MCF 10A (cell line): ENCODE measurements at regions of chr3 and their contacts with region 1.

Region 1: DNA sequence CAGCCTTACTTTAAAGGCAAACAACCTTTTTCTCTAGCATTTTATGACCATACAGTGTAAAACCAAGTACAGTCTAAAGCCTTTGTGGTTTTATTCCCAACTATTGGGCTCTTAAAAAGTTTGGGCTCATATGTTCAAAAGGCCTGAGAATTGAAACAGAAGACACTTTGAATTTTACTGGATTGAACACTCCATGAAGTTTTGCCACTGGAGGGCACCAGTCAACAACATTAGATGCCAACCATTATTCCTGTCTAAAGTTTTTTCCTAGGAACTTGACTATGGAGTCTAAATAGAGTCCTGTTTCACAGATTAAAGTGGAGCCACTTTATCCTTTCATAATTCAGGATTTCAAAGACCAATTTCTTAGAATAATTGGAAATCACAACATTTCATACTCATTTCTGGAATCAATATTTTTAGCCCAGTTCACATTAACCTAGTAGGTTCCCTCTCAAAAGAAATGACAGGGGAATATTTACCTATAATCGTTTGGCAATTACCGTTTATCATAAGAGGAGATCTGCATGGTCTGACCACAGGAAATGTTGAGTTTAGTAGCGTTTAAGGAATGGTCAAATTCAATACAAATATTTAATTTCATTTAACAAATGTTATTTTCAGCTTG is 244.1 kb upstream of the PDZRN3 start:
- DNase-seq: peak; percentile 54
- H3K4me3 Mint-ChIP-seq: no peak overlapping the region
- H3K27ac Mint-ChIP-seq: no peak overlapping the region
- H3K4me1 Mint-ChIP-seq: peaks cover 4% of the 10 kb centered on the region
- H3K27me3 Mint-ChIP-seq: peaks cover 11% of the 10 kb centered on the region
- CTCF ChIP-seq: peak; percentile 55

Region 2: DNA sequence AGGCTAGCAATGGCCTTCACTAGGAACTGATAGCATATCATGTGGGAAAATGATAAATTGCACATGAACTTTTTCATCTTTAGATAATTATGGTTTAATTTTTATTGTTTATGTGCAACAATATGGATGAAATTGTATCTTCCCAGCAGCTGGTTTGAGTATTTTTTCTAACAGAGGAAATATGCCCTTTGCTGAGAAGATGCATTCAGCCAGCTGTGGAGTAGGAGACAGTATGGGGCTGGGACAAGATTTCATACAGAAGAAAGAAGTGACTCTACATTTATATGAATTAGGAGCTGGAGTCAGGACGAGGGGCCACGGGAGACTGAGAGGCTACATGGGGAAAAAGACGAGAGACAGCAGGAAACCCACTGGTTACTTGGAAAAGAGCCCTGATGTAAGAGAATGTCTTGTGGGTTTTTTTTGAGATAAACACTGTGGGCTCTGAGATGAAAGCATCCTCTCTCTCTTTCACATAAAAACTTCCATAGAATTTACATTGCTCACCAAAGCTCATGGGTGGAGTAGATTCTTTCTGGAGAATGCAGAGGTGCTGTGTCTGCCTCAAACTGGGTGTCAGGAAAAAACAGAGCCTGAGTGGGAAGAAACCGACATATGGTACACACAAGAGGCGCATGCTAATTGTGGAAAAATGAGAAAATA is 128.9 kb before region 1 on chr3:
- CTCF ChIA-PET with region 1: no interaction called
- POLR2A ChIA-PET with region 1: no interaction called
- intact Hi-C with region 1: no loop called
- DNase-seq: no peak
- H3K4me3 Mint-ChIP-seq: no peak overlapping the region
- H3K27ac Mint-ChIP-seq: no peak overlapping the region
- H3K4me1 Mint-ChIP-seq: no peaks in the 10 kb centered on the region
- H3K27me3 Mint-ChIP-seq: no peaks in the 10 kb centered on the region
- CTCF ChIP-seq: no peak

Region 3: DNA sequence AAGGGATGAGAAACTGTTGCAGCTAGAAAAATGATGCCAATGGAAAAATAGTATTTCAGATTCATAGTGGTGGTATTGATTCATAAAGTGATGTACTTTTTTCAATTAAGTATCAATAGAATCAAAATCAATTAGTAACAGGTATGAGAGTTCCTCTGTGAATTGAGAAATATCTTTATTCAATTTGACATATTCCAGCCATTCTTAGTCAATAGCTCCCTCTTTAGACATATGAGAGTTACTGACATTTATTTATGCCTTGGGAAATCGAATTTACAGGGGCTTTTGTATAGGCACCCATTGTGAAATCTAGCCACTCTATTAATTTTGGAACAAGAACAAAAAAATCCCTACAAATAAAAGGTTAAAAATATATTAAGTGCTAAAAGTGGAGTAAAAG is 1132.5 kb after region 1 on chr3:
- CTCF ChIA-PET with region 1: no interaction called
- POLR2A ChIA-PET with region 1: no interaction called
- intact Hi-C with region 1: loop called (anchors 2 kb)
- DNase-seq: peak; percentile 25
- H3K4me3 Mint-ChIP-seq: no peak overlapping the region
- H3K27ac Mint-ChIP-seq: no peak overlapping the region
- H3K4me1 Mint-ChIP-seq: no peaks in the 10 kb centered on the region
- H3K27me3 Mint-ChIP-seq: no peaks in the 10 kb centered on the region
- CTCF ChIP-seq: peak; percentile 37

Region 4: GRCh38 chr3:75171630-75172230 is 1302.9 kb after region 1 on chr3:
- CTCF ChIA-PET with region 1: interaction called, 5 read pairs
- POLR2A ChIA-PET with region 1: no interaction called
- intact Hi-C with region 1: loop called (anchors 1 kb)
- DNase-seq: peak; percentile 9
- H3K4me3 Mint-ChIP-seq: no peak overlapping the region
- H3K27ac Mint-ChIP-seq: no peak overlapping the region
- H3K4me1 Mint-ChIP-seq: no peaks in the 10 kb centered on the region
- H3K27me3 Mint-ChIP-seq: peaks cover 11% of the 10 kb centered on the region
- CTCF ChIP-seq: no peak